ENCODE measurements at regions of chr11 and their contacts with region 1.

Region 1: DNA sequence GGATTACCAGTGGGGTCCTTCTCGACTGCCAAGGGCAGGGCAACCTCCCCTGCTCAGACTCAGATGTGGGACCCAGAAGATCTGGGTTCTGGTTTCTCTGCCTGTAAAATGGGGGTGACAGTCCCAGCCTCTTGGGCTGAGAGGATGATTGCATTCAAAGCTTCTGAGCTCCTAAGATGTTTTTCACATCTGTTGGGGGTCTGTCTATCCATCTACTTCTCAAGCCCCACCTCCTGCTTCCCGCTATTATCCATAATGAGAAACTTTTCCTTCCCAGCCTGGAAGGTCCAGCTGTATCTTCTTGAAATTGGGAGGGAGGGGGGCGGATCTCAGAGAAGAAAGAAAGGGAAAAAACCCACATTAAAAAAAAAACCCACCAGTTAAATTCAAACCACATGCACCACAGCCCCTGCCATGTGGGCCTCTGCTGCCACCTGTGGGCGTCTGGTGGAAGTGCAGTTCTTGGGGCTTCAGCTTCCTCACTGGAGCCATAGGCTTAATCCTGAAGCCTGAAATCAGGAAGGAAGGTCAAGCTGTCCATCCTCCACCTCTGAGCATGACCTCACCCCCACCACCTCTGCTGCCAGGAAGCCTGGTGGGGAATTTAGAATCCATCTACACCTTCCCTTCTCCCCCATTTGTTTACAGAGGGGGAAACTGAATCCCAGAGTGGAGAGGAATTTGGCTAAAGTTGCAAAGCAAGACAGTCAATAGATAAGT is 27.3 kb downstream of the ARHGEF17 start:
- DNase-seq: peak; percentile 84
- CTCF ChIP-seq: peak; percentile 99

Region 2: DNA sequence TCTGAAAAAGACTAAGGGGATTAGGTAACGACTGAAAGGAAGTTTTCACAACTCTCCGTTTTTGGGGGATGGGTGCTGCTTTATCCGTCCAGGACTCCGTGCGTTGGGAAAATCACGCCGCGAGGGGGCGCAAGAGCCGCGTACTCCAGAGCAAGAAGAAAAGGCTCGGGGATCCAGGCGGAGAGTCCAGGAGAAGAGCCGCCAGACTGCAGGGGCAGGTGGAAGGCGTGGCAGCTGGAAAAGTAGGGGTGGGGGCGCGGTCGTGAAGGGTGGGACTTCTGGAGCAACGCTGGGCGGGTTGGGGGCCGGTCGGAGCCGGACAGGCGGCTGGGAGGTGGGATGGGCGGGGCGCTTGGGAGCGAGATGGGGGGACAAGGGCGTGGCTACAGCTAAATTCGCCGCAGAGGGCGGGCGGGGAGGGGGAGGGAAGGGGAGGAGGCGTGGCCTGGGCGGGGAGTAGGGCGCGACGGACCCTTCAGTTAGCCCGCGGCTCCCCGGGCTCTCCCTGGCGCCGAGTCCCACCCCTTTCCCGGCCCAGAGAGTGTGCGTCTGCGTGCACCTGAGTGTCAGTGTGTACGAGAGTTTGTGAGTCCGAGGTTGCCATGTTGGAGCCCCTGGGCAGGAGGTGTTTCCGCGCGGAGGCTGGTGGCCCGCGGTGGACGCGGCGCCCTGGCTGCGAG is 27.9 kb before region 1 on chr11:
- CTCF ChIA-PET with region 1: interaction called, 605 read pairs
- POLR2A ChIA-PET with region 1: interaction called, 11 read pairs
- DNase-seq: peak; percentile 95
- CTCF ChIP-seq: peak; percentile 89

Region 3: DNA sequence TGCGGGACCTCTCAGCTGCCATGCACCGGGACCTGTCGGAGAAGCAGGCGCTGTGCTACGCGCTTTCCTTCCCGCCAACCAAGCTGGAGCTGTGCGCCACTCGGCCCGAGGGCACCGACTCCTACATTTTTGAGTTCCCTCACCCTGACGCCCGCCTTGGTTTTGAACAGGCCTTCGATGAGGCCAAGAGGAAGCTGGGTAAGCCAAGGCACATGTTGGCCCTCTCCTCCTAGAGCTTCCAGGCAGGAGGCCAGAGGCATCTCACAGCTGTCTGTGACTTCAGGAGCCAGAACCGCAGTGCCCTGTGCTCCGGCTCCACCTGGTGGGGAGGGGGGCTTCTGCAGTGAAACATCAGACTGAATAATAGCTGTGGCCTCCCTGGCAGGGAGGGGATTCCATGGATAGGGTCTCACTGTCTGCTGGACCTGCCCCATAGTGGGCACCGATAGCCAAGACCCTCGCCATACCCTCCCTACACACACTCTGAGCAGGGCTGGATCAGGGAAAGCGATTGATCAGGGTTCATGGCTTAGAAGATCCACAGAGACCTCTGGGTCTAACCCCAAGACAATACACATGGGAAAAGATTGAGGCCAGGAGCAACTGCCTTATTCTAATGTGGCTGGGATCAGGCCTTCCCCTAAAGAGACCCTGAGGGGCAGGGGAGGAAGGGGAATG is 25.1 kb after region 1 on chr11:
- CTCF ChIA-PET with region 1: interaction called, 112 read pairs
- POLR2A ChIA-PET with region 1: no interaction called
- DNase-seq: no peak
- CTCF ChIP-seq: peak; percentile 32

Region 4: DNA sequence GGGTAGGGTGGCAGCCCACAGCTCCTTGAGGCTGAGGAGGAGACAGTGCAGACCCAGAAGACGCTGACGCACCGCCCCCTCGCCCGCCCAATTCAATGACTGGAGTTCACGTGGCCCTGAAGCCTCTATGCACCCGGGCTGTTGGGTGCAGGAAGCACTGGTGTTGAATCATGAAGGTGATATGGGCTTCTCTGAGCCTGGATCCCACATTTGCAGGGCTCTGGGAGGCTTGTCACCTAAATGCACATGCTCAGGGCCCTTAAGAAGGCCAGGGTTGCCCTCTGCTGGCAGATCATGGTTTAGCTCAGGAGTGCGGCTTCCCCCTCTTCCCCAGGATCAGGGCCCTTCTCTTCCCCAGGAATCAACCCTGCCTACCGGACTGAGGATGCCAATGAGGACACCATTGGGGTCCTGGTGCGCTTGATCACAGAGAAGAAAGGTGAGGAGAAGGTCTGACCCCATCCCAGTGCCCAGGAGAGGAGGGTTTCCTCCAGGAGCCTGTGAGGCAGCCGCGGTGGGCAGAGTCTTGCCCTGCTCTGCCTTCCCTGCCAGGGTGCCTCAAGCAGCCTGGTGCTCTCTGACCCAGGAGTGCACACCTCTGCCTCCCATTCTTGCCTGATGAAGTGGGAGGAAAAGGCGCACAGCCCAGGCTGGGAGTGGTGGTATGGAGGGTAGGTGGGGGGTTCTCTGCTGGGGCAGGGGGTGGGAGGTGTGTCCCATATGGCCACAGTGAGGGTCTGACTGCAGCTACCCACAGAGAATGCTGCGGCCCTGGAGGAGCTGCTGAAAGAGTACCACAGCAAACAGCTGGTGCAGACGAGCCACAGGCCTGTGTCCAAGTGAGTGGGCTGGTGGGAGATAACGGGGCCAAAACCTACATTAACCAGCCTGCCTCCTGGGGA is 58.4 kb after region 1 on chr11:
- CTCF ChIA-PET with region 1: interaction called, 25 read pairs
- POLR2A ChIA-PET with region 1: no interaction called
- DNase-seq: peak; percentile 82
- CTCF ChIP-seq: peak; percentile 76